Activated T-helper 2 cell treated with anti-CD3 and anti-CD28 coated beads, Interferon-gamma antibody, Interleukin-2, Interleukin-4, amounts not matched to agents 10 μg/mL and 5 μg/mL and 100 μg/mL, durations not matched to agents 14 hours and 24 hours and 36 hours (primary cell): ENCODE measurements at regions of chr5 and their contacts with region 1.

Region 1: DNA sequence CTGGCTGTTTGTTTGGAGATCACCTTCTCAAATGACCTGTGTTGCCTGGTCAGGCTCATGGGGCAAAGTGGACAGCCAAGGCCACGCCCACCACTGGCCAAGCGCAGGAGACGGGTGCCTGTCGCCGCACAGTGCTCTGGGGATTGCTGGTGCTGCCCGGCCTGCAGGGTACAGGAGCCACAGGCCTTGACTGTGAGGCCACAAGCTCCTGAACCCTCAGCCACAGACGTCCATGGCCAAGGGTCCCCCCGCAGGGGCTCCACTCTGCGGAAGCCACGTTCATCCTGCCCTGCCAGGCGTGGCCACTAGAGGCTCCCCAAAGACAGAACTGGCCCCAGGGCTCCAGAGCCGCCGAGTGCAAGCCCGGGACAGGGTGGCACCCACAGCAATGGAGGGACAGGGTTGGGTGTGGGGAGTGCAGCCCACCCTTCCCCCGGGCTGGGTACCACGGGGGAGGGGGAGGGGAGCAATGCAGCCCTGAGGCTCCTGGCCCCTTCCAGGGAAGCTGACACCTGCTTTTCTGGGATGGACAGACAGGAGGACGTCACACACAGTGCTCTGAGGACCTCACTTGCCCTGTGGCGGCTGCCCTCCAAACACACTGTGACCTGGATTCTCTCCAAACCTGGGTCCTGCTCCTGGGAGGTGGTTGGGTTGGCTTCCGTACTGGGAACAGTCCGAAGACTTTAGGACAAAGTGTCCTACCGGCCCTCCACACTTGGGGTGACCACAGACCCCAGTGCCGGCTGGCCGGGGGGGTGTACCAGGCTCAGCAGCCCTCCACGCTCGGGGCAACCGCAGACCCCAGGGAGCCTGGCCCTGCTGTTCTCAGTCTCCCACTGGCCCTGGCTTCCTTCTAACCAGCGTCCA is 21.5 kb downstream of the TPPP start:
- DNase-seq: peak; percentile 57
- H3K4me3 Mint-ChIP-seq: no peak overlapping the region
- H3K27ac Mint-ChIP-seq: no peak overlapping the region
- H3K4me1 Mint-ChIP-seq: peaks cover 4% of the 10 kb centered on the region
- H3K27me3 Mint-ChIP-seq: no peaks in the 10 kb centered on the region

Region 2: GRCh38 chr5:717143-717542 is 45.4 kb after region 1 on chr5:
- intact Hi-C with region 1: no loop called
- DNase-seq: no peak
- H3K4me3 Mint-ChIP-seq: no peak overlapping the region
- H3K27ac Mint-ChIP-seq: no peak overlapping the region
- H3K4me1 Mint-ChIP-seq: no peaks in the 10 kb centered on the region
- H3K27me3 Mint-ChIP-seq: peaks cover 23% of the 10 kb centered on the region

Region 3: GRCh38 chr5:821504-821903 is 149.8 kb after region 1 on chr5:
- intact Hi-C with region 1: no loop called
- DNase-seq: no peak
- H3K4me3 Mint-ChIP-seq: no peak overlapping the region
- H3K27ac Mint-ChIP-seq: no peak overlapping the region
- H3K4me1 Mint-ChIP-seq: no peaks in the 10 kb centered on the region
- H3K27me3 Mint-ChIP-seq: no peaks in the 10 kb centered on the region

Region 4: DNA sequence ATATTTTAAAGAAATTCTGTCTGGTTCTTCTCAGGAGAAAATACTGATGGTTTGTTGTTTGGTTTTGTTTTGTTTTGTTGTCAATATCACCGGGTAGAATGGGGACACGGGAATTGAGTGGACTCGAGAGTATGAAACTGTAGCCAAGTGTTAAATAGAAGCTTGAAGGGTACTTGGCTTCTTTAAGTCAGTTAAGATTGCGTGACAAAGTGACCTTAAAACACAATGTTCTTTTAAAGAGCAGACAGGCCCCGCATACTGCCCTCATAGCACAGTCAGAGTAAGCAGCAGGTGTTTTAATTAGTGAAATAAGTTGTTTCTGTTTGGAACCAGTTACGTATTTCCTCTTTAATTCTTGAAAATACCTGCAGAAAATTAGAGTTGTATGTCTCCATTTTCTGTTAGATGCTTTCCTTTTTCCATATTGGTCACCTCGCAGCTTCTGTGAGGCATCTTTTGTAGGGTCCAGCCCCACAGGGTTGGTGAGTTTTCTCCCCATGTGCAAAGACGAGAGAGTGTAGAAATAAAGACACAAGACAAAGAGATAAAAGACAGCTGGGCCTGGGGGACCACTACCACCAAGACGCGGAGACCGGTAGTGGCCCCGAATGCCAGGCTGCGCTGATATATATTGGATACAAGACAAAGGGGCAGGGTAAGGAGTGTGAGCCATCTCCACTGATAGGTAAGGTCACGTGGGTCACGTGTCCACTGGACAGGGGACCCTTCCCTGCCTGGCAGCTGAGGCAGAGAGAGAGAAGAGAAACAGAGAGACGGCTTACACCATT is 230.6 kb after region 1 on chr5:
- intact Hi-C with region 1: loop called (anchors 5 kb)
- DNase-seq: no peak
- H3K4me3 Mint-ChIP-seq: no peak overlapping the region
- H3K27ac Mint-ChIP-seq: no peak overlapping the region
- H3K4me1 Mint-ChIP-seq: no peaks in the 10 kb centered on the region
- H3K27me3 Mint-ChIP-seq: no peaks in the 10 kb centered on the region